Activated CD8-positive, alpha-beta T cell treated with anti-CD3 and anti-CD28 coated beads for 36 hours (primary cell): ENCODE measurements at regions of chr14 and their contacts with region 1.

Region 1: GRCh38 chr14:80941241-80942182 is at the start of gene CEP128:
- DNase-seq: peak; percentile 94
- ATAC-seq: peak; percentile 89
- H3K4me3 Mint-ChIP-seq: peak within 1 kb of the TSS; percentile 90
- H3K27ac Mint-ChIP-seq: peak within 1 kb of the TSS; percentile 98
- H3K4me1 Mint-ChIP-seq: peaks cover 30% of the 10 kb centered on the region
- H3K27me3 Mint-ChIP-seq: no peaks in the 10 kb centered on the region
- CTCF ChIP-seq: no peak
- total RNA-seq, gene CEP128: 21.6 to 22.5 TPM

Region 2: GRCh38 chr14:80930836-80931389 is 10.6 kb before region 1 on chr14:
- CTCF ChIA-PET with region 1: interaction called, 5 read pairs
- POLR2A ChIA-PET with region 1: interaction called, 29 read pairs
- intact Hi-C with region 1: loop called (anchors 1 kb)
- DNase-seq: peak; percentile 81
- ATAC-seq: peak; percentile 97
- H3K4me3 Mint-ChIP-seq: peak overlapping the region; percentile 52
- H3K27ac Mint-ChIP-seq: peak overlapping the region; percentile 79
- H3K4me1 Mint-ChIP-seq: peaks cover 30% of the 10 kb centered on the region
- H3K27me3 Mint-ChIP-seq: no peaks in the 10 kb centered on the region
- CTCF ChIP-seq: no peak